Right ventricle myocardium inferior (tissue), 1 donor: ENCODE measurements at regions of chr15 and their contacts with region 1.

Region 1: GRCh38 chr15:73273181-73274002 is 95.4 kb downstream of the HCN4 start:
- DNase-seq: no peak
- ATAC-seq: peak; percentile 64

Region 2: DNA sequence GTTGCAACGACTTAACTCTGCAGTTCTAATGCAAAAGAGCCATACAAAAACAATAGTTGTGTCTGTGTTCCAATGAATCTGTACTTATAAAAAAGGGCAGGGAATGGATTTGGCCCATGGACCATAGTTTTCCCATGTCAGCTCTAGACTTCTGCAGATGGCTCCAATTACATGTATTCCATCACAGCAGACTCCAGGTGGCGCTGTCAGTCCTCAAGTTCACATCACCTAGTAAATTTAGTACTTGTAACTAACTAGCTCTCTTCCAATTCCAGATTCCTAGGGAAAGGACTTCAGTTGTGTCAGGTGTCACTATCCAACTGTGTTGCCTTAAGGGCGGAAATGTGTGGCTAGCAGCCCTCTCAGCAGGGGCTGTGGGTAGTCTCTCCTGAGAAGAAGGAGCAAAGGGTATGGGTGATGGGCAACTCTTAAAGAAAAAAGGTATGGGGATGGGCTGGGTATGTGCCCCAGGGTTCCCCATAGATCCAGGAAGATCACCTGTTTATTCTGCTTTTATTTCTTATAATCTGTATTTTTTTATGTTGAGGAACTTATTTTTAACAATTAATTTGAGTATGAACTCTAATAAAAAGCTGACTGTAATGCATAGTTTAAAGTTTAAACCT is 551.2 kb before region 1 on chr15:
- intact Hi-C with region 1: loop called (anchors 10 kb)
- DNase-seq: no peak
- ATAC-seq: peak; percentile 39

Region 3: DNA sequence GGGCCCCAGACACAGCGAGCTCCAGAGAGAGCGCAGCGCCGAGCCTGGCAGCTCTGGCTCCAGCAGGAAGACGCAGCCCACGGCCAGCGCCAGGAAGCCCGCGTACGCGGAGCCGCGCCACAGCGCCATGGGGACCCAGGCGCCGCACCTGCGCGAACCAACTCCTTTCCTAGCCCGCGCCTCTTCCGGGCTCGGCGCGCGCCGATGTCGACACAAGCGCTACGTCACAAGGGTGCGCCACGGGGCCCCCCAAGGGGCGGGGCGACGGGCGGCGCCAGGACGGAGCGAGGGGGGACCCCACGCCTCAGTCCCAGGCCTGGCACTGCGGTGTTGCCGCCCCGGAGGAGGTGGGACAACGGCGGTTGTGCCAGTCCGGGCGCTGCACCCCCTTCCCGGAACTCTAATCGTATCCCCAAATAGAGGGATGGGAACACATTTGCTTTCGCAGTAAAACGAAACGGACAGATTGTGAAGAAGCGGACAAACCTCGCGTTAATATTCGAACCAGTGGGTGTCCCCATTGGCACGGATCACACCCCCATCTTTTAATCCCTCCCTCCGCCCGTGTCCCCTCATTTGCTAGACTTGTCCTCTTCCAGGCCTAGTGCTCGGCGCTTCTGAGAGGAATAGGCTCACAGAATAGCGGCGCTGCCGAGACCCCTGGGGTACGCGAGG is 489.7 kb before region 1 on chr15 and contains the start of gene ADPGK:
- intact Hi-C with region 1: loop called (anchors 10 kb)
- DNase-seq: peak; percentile 95
- ATAC-seq: peak; percentile 97
- total RNA-seq, gene ADPGK: 11.4 TPM

Region 4: GRCh38 chr15:73240866-73241499 is 32.4 kb before region 1 on chr15:
- intact Hi-C with region 1: loop called (anchors 5 kb)
- DNase-seq: no peak
- ATAC-seq: no peak

Region 5: DNA sequence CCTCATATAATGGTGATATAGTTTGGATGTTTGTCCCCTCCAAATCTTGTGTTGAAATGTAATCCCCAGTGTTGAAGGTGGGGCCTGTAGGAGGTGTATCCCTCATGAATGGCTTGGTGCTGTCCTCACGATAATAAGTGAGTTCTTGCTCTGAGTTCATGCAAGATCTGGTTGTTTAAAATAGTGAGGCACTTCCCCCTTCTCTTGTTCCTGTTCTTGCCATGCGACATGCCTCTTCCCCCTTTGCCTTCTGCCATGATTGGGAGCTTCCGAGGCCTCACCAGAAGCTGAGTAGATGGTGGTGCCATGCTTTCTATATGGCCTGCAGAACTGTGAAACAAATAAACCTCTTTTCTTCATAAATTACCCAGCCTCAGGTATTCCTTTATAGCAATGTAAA is 208.8 kb after region 1 on chr15:
- intact Hi-C with region 1: no loop called
- DNase-seq: no peak
- ATAC-seq: no peak